Activated B cell treated with CpG ODN at 0.5 μM for 24 hours (primary cell): ENCODE measurements at regions of chr2 and their contacts with region 1.

Region 1: GRCh38 chr2:197052356-197052755 is 125.8 kb upstream of the PGAP1 start:
- DNase-seq: no peak
- ATAC-seq: no peak
- H3K4me3 Mint-ChIP-seq: no peak overlapping the region
- H3K27ac Mint-ChIP-seq: no peak overlapping the region
- H3K4me1 Mint-ChIP-seq: no peaks in the 10 kb centered on the region
- H3K27me3 Mint-ChIP-seq: no peaks in the 10 kb centered on the region
- CTCF ChIP-seq: no peak

Region 2: GRCh38 chr2:197092431-197092830 is 40.1 kb after region 1 on chr2:
- CTCF ChIA-PET with region 1: no interaction called
- POLR2A ChIA-PET with region 1: no interaction called
- intact Hi-C with region 1: loop called (anchors 1 kb)
- DNase-seq: no peak
- ATAC-seq: no peak
- H3K4me3 Mint-ChIP-seq: no peak overlapping the region
- H3K27ac Mint-ChIP-seq: peak overlapping the region; percentile 57
- H3K4me1 Mint-ChIP-seq: peaks cover 11% of the 10 kb centered on the region
- H3K27me3 Mint-ChIP-seq: no peaks in the 10 kb centered on the region
- CTCF ChIP-seq: no peak